ENCODE measurements at regions of chr14 and their contacts with region 1.

Region 1: DNA sequence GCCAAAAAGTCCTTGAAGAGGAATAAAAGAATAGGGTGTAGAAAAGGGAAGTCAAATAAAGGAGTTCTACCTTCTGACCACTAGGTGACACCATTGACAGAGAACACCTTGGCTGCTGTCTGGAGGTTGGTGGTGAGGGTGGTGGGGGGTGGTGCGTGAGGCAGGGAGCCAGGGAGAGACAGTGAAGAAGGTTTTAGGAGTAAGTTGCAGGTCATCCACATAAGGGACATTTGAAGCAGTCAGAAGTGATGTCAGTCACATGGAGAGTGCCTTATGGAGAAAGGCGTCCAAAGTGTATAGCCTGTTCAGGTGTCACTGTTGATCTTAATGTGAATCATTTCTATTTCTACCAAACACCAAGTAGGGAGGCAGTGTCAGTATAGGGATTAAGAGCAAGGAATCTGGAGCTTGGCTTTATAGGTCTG is 279.3 kb upstream of the DDHD1 start:
- DNase-seq: peak; percentile 37
- H3K4me3 ChIP-seq: no peak overlapping the region
- H3K27ac ChIP-seq: no peak overlapping the region
- H3K4me1 ChIP-seq: no peaks in the 10 kb centered on the region
- H3K27me3 ChIP-seq: no peaks in the 10 kb centered on the region
- CTCF ChIP-seq: peak; percentile 81 to 85

Region 2: GRCh38 chr14:53696217-53696965 is 264.0 kb after region 1 on chr14:
- CTCF ChIA-PET with region 1: no interaction called
- dilution Hi-C with region 1: no loop called
- in situ Hi-C with region 1: no loop called
- intact Hi-C with region 1: loop called (anchors 10 kb)
- DNase-seq: peak; percentile 57
- H3K4me3 ChIP-seq: no peak overlapping the region
- H3K27ac ChIP-seq: no peak overlapping the region
- H3K4me1 ChIP-seq: no peaks in the 10 kb centered on the region
- H3K27me3 ChIP-seq: peaks cover 5% of the 10 kb centered on the region
- CTCF ChIP-seq: no peak

Region 3: DNA sequence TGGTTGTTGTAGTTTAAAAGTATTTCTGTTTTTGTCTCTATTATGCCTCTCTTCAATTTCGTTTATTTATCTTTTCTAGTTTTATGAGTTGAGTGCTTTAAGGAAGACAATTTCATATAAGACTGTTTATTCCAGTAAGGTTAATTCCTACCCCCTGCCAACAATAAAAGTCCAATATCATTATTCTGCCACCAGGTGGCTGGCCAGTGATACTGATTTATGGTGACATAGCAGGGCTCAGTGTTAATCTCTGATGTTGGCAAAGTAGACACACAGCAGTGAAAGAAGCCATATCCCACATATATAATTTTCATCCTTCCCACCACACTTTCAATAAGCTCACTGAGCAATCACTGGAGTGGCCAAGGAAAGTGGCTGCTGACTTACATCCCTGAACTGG is 593.3 kb after region 1 on chr14:
- CTCF ChIA-PET with region 1: no interaction called
- dilution Hi-C with region 1: no loop called
- in situ Hi-C with region 1: no loop called
- intact Hi-C with region 1: loop called (anchors 5 kb)
- DNase-seq: peak; percentile 41
- H3K4me3 ChIP-seq: no peak overlapping the region
- H3K27ac ChIP-seq: no peak overlapping the region
- H3K4me1 ChIP-seq: no peaks in the 10 kb centered on the region
- H3K27me3 ChIP-seq: no peaks in the 10 kb centered on the region
- CTCF ChIP-seq: peak; percentile 60 to 62

Region 4: GRCh38 chr14:54338696-54339317 is 906.4 kb after region 1 on chr14:
- CTCF ChIA-PET with region 1: no interaction called
- dilution Hi-C with region 1: no loop called
- in situ Hi-C with region 1: loop called (anchors 25 kb)
- intact Hi-C with region 1: loop called (anchors 2 kb)
- DNase-seq: peak; percentile 37
- H3K4me3 ChIP-seq: no peak overlapping the region
- H3K27ac ChIP-seq: no peak overlapping the region
- H3K4me1 ChIP-seq: no peaks in the 10 kb centered on the region
- H3K27me3 ChIP-seq: no peaks in the 10 kb centered on the region
- CTCF ChIP-seq: peak; percentile 77 to 78

Measured in mammary epithelial cell (primary cell).